Activated B cell treated with CpG ODN at 0.5 μM for 24 hours (primary cell): ENCODE measurements at regions of chr3 and their contacts with region 1.

Region 1: GRCh38 chr3:39383045-39383880 is at the start of gene SLC25A38:
- DNase-seq: peak; percentile 72
- ATAC-seq: peak; percentile 73
- H3K4me3 Mint-ChIP-seq: peak within 1 kb of the TSS; percentile 99
- H3K27ac Mint-ChIP-seq: peak within 1 kb of the TSS; percentile 100
- H3K4me1 Mint-ChIP-seq: peaks cover 49% of the 10 kb centered on the region
- H3K27me3 Mint-ChIP-seq: no peaks in the 10 kb centered on the region
- CTCF ChIP-seq: no peak
- total RNA-seq, gene SLC25A38: 51.6 and 52.9 TPM in 2 replicates

Region 2: GRCh38 chr3:38164966-38165680 is 1218.1 kb before region 1 on chr3 and contains the start of gene OXSR1:
- CTCF ChIA-PET with region 1: no interaction called
- POLR2A ChIA-PET with region 1: no interaction called
- intact Hi-C with region 1: loop called (anchors 10 kb)
- DNase-seq: peak; percentile 95
- ATAC-seq: peak; percentile 88
- H3K4me3 Mint-ChIP-seq: peak within 1 kb of the TSS; percentile 94
- H3K27ac Mint-ChIP-seq: peak within 1 kb of the TSS; percentile 100
- H3K4me1 Mint-ChIP-seq: peaks cover 45% of the 10 kb centered on the region
- H3K27me3 Mint-ChIP-seq: no peaks in the 10 kb centered on the region
- CTCF ChIP-seq: no peak
- total RNA-seq, gene OXSR1: 34.8 and 40.2 TPM in 2 replicates

Region 3: GRCh38 chr3:39013289-39013688 is 370.0 kb before region 1 on chr3:
- CTCF ChIA-PET with region 1: no interaction called
- POLR2A ChIA-PET with region 1: no interaction called
- intact Hi-C with region 1: no loop called
- DNase-seq: no peak
- ATAC-seq: no peak
- H3K4me3 Mint-ChIP-seq: no peak overlapping the region
- H3K27ac Mint-ChIP-seq: no peak overlapping the region
- H3K4me1 Mint-ChIP-seq: no peaks in the 10 kb centered on the region
- H3K27me3 Mint-ChIP-seq: peaks cover 10% of the 10 kb centered on the region
- CTCF ChIP-seq: no peak

Region 4: DNA sequence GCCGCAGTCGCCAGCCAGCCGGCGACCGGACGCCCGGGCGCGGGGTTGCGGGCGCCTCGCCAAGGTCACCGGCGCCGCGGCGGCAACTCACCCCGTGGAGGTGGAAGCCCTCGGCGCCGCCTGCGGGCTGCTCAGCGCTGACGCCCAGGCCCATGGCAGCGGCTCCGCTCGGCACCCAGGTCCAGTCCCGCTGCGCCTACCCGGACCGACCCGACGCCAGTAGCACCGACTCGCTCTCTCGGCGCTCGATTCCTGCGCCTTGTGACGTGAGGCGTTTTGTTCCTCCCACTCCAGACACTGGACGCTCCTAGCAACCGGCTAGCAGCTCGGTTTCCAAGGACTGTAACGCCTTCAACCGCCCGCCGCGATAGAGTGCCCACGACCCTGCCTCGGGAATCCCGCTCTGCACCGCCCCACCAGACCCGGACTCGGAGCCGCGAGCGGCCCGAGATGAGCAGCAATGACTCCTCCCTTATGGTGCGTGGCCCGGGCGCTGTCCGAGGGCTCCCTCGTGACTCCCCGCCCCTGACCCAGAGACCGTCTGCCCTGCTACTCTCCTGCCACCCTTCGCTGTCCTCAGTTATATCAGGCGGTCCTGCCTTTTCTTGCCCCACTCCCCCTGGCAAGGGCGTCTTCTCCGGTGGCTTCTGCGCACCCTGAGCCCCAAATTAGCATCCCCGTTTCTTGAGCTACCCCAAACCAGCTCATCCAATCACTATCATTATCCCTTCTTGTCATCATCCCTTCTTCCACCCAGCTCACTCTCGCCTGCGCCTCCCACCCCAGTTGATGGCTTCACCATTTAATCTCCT is 275.7 kb before region 1 on chr3 and contains the starts of genes GORASP1 and TTC21A:
- CTCF ChIA-PET with region 1: no interaction called
- POLR2A ChIA-PET with region 1: no interaction called
- intact Hi-C with region 1: loop called (anchors 1 kb)
- DNase-seq: peak; percentile 64
- ATAC-seq: peak; percentile 50
- H3K4me3 Mint-ChIP-seq: peak within 1 kb of the TSS; percentile 98
- H3K27ac Mint-ChIP-seq: peak within 1 kb of the TSS; percentile 91
- H3K4me1 Mint-ChIP-seq: peaks cover 62% of the 10 kb centered on the region
- H3K27me3 Mint-ChIP-seq: no peaks in the 10 kb centered on the region
- CTCF ChIP-seq: no peak
- total RNA-seq, gene GORASP1: 41.6 and 47.8 TPM in 2 replicates
- total RNA-seq, gene TTC21A: 11.4 and 15.9 TPM in 2 replicates

Region 5: DNA sequence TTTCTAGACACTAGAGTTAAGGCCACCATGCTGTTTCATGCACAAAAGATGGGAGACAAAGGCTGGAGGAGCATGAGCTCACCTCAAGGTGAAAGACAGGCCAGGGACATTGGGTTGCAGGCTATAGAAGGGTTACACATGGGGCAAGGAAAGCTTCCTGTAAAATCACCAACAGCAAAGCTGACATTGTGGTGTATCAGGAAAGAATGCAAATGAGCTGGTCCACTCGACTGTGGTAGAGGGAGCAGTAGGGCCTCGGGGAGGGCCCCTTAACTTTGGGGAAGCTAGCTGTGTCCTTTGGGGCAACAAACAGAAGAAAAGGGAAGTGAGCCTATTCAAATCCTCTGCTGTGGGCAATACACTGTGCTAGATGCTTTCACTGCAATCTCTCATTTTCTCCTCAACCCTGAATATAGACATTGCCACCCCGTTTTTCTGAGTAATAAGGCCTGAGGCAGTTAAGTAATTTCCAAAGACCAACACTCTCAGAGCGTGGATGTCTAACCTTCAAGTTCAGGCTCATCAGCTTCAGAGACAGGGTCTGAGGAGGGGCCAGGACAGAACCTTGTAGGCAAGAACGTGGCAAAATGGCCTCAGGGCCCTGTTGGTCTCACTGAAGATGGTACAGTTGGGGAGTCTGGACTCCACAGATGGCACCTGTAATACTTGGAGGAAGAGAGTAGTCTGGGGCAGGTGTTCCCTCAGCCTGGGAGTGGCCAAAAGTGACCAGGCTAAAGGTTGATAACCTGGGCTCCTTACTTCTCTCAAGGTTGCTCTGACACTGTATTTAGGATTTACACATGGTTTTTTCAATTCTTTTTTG is 127.5 kb before region 1 on chr3:
- CTCF ChIA-PET with region 1: no interaction called
- POLR2A ChIA-PET with region 1: interaction called, 3 read pairs
- intact Hi-C with region 1: loop called (anchors 2 kb)
- DNase-seq: peak; percentile 57
- ATAC-seq: peak; percentile 96
- H3K4me3 Mint-ChIP-seq: peak overlapping the region; percentile 58
- H3K27ac Mint-ChIP-seq: peak overlapping the region; percentile 95
- H3K4me1 Mint-ChIP-seq: peaks cover 86% of the 10 kb centered on the region
- H3K27me3 Mint-ChIP-seq: no peaks in the 10 kb centered on the region
- CTCF ChIP-seq: no peak

Region 6: GRCh38 chr3:39279745-39280517 is 103.3 kb before region 1 on chr3 and contains the start of gene CX3CR1:
- CTCF ChIA-PET with region 1: no interaction called
- POLR2A ChIA-PET with region 1: no interaction called
- intact Hi-C with region 1: no loop called
- DNase-seq: no peak
- ATAC-seq: no peak
- H3K4me3 Mint-ChIP-seq: no peak within 1 kb of the TSS
- H3K27ac Mint-ChIP-seq: peak within 1 kb of the TSS; percentile 43
- H3K4me1 Mint-ChIP-seq: peaks cover 35% of the 10 kb centered on the region
- H3K27me3 Mint-ChIP-seq: no peaks in the 10 kb centered on the region
- CTCF ChIP-seq: no peak
- total RNA-seq, gene CX3CR1: 0.12 and 0.38 TPM in 2 replicates

Region 7: GRCh38 chr3:39501968-39502837 is 118.9 kb after region 1 on chr3:
- CTCF ChIA-PET with region 1: no interaction called
- POLR2A ChIA-PET with region 1: no interaction called
- intact Hi-C with region 1: no loop called
- DNase-seq: no peak
- ATAC-seq: no peak
- H3K4me3 Mint-ChIP-seq: no peak overlapping the region
- H3K27ac Mint-ChIP-seq: no peak overlapping the region
- H3K4me1 Mint-ChIP-seq: no peaks in the 10 kb centered on the region
- H3K27me3 Mint-ChIP-seq: peaks cover 32% of the 10 kb centered on the region
- CTCF ChIP-seq: no peak

Region 8: DNA sequence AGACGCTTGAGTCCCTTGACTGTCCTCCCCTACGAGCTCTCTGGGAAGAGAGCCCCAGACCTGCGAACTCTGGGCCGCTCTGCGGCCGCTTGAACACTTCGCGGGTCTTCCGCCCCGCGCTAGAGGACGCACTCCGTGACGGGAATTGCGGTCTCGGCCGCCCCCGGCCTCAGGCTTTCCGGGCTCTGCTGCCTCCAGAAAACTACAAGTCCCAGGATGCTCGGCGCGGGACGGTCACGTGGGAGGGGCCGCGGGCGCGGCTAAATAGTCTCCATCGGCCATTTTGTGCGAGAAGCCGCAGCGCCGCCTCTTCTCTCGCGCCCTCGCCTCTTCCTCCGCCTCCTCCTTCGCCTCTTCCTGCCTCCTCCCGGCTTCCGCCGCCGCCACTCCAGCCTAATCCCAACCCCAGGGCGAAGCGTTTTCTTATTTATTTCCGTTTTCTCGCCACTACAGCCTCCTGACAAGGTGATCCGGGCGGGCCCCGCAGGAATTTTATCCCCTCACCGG is 926.2 kb after region 1 on chr3 and contains the start of gene EIF1B:
- CTCF ChIA-PET with region 1: no interaction called
- POLR2A ChIA-PET with region 1: no interaction called
- intact Hi-C with region 1: loop called (anchors 1 kb)
- DNase-seq: peak; percentile 99
- ATAC-seq: peak; percentile 88
- H3K4me3 Mint-ChIP-seq: peak within 1 kb of the TSS; percentile 99
- H3K27ac Mint-ChIP-seq: peak within 1 kb of the TSS; percentile 99
- H3K4me1 Mint-ChIP-seq: peaks cover 35% of the 10 kb centered on the region
- H3K27me3 Mint-ChIP-seq: no peaks in the 10 kb centered on the region
- CTCF ChIP-seq: no peak
- total RNA-seq, gene EIF1B: 62.0 and 65.5 TPM in 2 replicates

Region 9: GRCh38 chr3:40333416-40333815 is 950.2 kb after region 1 on chr3:
- CTCF ChIA-PET with region 1: no interaction called
- POLR2A ChIA-PET with region 1: no interaction called
- intact Hi-C with region 1: no loop called
- DNase-seq: no peak
- ATAC-seq: no peak
- H3K4me3 Mint-ChIP-seq: no peak overlapping the region
- H3K27ac Mint-ChIP-seq: no peak overlapping the region
- H3K4me1 Mint-ChIP-seq: no peaks in the 10 kb centered on the region
- H3K27me3 Mint-ChIP-seq: peaks cover 2% of the 10 kb centered on the region
- CTCF ChIP-seq: no peak

Region 10: DNA sequence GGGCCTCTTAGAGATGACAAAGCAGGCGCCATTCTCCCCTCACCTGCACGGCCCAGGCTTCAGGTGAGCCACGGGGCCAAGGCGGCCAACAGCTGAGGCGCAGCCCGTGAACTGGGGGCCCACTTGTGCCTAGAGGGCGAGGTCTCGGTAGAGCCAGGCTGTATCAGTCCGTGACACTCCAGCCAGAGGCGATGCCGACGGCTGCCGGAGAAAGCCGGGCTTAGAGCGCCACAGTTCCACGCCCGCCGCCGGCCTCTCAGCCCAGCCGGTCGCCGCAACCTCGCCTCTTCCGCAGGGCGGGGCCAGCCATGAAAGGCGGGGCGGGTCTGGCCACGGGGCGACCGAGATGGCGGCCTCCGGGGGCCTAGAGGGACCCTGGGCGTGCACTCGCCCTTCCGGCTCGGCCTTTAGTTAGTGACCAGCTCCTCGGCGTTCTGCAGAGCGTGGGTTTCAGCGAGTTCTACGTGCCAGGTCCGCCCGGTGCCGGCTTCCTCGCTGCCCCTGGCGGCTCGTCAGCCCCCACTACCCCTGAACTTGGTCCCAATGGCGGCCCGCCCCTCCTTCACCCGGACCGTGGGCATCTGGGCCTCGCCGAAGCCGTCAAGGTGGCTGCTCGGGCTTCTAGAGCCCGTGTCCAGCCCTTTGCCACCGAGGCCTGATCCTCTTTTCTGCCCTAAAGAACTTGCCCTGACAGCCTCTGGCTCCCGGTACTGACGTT is 1141.5 kb after region 1 on chr3 and contains the start of gene ZNF621:
- CTCF ChIA-PET with region 1: no interaction called
- POLR2A ChIA-PET with region 1: no interaction called
- intact Hi-C with region 1: loop called (anchors 10 kb)
- DNase-seq: peak; percentile 88
- ATAC-seq: peak; percentile 99
- H3K4me3 Mint-ChIP-seq: peak within 1 kb of the TSS; percentile 93
- H3K27ac Mint-ChIP-seq: peak within 1 kb of the TSS; percentile 91
- H3K4me1 Mint-ChIP-seq: peaks cover 18% of the 10 kb centered on the region
- H3K27me3 Mint-ChIP-seq: no peaks in the 10 kb centered on the region
- CTCF ChIP-seq: no peak
- total RNA-seq, gene ZNF621: 20.2 and 25.8 TPM in 2 replicates